ENCODE measurements at regions of chr12 and their contacts with region 1.

Region 1: GRCh38 chr12:121626087-121626852 is at the start of gene ORAI1:
- DNase-seq: peak; percentile 63
- ATAC-seq: peak; percentile 75
- H3K4me3 ChIP-seq: peak within 1 kb of the TSS; percentile 83
- H3K27ac ChIP-seq: peak within 1 kb of the TSS; percentile 92
- H3K4me1 ChIP-seq: peaks cover 19% of the 10 kb centered on the region
- H3K27me3 ChIP-seq: no peaks in the 10 kb centered on the region
- CTCF ChIP-seq: peak in 1 of 3 experiments; percentile 31; a peak in 1 of 6 replicates
- EP300 ChIP-seq: no peak
- POLR2A ChIP-seq: peak; percentile 85
- RAD21 ChIP-seq: no peak
- polyA plus RNA-seq, gene ORAI1: 5.5 to 6.1 TPM

Region 2: GRCh38 chr12:121388421-121388981 is 237.8 kb before region 1 on chr12:
- CTCF ChIA-PET with region 1: no interaction called
- POLR2A ChIA-PET with region 1: no interaction called
- RAD21 ChIA-PET with region 1: no interaction called
- SMC1A ChIA-PET with region 1: no interaction called
- in situ Hi-C with region 1: no loop called
- intact Hi-C with region 1: no loop called
- DNase-seq: no peak
- ATAC-seq: no peak
- H3K4me3 ChIP-seq: no peak overlapping the region
- H3K27ac ChIP-seq: no peak overlapping the region
- H3K4me1 ChIP-seq: peaks cover 7% of the 10 kb centered on the region
- H3K27me3 ChIP-seq: no peaks in the 10 kb centered on the region
- CTCF ChIP-seq: no peak
- EP300 ChIP-seq: no peak
- POLR2A ChIP-seq: no peak
- RAD21 ChIP-seq: no peak

Region 3: GRCh38 chr12:121499929-121500793 is 126.1 kb before region 1 on chr12:
- CTCF ChIA-PET with region 1: interaction called, 10 read pairs
- POLR2A ChIA-PET with region 1: interaction called, 7 read pairs
- RAD21 ChIA-PET with region 1: interaction called, 7 read pairs
- SMC1A ChIA-PET with region 1: interaction called, 10 read pairs
- in situ Hi-C with region 1: no loop called
- intact Hi-C with region 1: loop called (anchors 1 kb)
- DNase-seq: no peak
- ATAC-seq: peak; percentile 94
- H3K4me3 ChIP-seq: no peak overlapping the region
- H3K27ac ChIP-seq: no peak overlapping the region
- H3K4me1 ChIP-seq: no peaks in the 10 kb centered on the region
- H3K27me3 ChIP-seq: no peaks in the 10 kb centered on the region
- CTCF ChIP-seq: peak; percentile 85 to 96 (median 91)
- EP300 ChIP-seq: no peak
- POLR2A ChIP-seq: no peak
- RAD21 ChIP-seq: peak; percentile 92

Region 4: DNA sequence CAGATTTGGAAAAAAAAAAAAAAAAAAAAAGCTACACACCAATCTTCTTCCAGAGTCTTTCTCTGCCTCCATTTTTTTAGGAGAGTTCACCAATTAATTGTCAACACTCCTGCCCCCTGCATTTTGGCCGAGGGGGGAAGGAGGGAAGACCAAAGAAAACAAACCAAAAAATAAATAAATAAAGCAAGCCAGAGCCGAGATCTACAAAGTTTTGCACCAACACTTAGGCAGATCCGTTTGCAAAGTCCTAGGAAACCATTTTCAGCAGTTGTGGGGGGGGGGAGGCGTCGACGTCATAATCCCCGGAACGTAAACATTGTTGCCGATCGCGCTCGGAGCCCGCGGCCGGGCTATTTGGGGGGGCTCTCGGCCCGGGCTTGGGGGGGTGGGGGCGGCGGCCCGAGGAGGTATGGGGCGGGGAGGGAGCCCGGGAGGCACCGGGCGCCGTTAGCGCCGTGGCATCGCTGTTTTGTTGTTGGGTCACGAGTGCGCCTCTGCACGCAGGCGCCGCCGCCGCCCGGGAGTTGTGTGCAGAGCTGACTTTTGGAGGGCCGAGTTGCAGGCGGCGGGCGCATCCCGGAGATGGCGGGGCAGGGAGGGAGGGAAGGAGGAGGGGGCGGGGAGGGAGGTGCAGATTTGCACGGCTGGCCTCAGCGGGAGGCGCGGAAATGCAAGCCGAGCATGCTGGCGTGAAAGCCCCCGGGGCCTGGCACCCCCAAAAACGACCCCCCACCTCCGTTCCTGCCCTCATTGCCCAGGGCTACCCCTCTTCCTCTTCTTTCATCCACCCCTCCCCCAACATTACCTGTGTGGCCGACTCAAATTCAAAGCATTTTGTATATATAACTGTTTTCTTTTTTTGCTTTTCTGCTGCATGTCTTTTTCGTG is 46.0 kb before region 1 on chr12:
- CTCF ChIA-PET with region 1: interaction called, 5 read pairs
- POLR2A ChIA-PET with region 1: interaction called, 18 read pairs
- RAD21 ChIA-PET with region 1: interaction called, 31 read pairs
- SMC1A ChIA-PET with region 1: interaction called, 12 read pairs
- in situ Hi-C with region 1: no loop called
- intact Hi-C with region 1: no loop called
- DNase-seq: no peak
- ATAC-seq: peak; percentile 67
- H3K4me3 ChIP-seq: peak overlapping the region; percentile 77
- H3K27ac ChIP-seq: peak overlapping the region; percentile 59
- H3K4me1 ChIP-seq: peaks cover 19% of the 10 kb centered on the region
- H3K27me3 ChIP-seq: no peaks in the 10 kb centered on the region
- CTCF ChIP-seq: no peak
- EP300 ChIP-seq: no peak
- POLR2A ChIP-seq: peak; percentile 69
- RAD21 ChIP-seq: no peak

Region 5: GRCh38 chr12:121649819-121650353 is 23.6 kb after region 1 on chr12:
- CTCF ChIA-PET with region 1: interaction called, 4 read pairs
- POLR2A ChIA-PET with region 1: interaction called, 10 read pairs
- RAD21 ChIA-PET with region 1: no interaction called
- SMC1A ChIA-PET with region 1: interaction called, 3 read pairs
- in situ Hi-C with region 1: no loop called
- intact Hi-C with region 1: no loop called
- DNase-seq: no peak
- ATAC-seq: peak; percentile 52; the same call in 2 of the 3 replicates
- H3K4me3 ChIP-seq: no peak overlapping the region
- H3K27ac ChIP-seq: no peak overlapping the region
- H3K4me1 ChIP-seq: no peaks in the 10 kb centered on the region
- H3K27me3 ChIP-seq: no peaks in the 10 kb centered on the region
- CTCF ChIP-seq: no peak
- EP300 ChIP-seq: no peak
- POLR2A ChIP-seq: no peak
- RAD21 ChIP-seq: no peak

Region 6: DNA sequence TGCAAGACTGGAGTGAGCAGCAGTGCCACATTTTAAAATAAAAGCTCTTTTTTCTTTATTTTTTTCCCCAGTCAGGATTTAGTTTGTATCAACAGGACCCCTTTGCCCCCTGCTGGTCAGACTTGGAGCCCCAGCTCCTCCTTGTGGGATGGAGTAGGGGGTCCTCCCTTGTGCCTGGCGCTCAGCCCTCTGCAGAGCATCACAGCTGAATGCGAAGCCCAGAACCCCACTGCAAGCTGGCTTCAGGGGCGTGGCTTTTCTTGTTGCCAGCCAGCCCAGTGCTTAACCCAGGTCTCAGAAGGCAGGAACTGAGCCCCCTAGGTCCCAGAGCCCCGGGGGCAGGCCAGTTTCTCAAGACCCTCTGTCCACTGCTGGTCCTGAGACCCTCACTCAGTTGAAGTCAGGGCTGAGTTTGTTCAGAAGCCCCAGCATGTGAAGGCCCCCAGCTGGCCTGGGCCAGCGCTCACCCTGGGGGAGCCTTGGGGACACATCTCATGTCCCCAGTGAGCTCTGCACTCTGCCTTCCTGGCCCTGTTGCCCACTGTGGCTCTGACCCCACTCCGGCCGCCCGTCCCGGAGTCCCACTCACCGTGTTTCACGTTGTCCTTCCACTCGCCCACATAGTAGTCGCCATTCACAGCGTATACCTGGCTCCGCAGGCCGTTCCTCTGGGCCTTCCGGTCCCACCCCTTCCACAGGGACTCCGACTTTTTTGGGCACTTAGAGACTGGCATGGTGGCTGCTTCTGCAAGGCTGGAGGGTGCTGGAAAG is 42.7 kb after region 1 on chr12:
- CTCF ChIA-PET with region 1: interaction called, 32 read pairs
- POLR2A ChIA-PET with region 1: interaction called, 13 read pairs
- RAD21 ChIA-PET with region 1: interaction called, 61 read pairs
- SMC1A ChIA-PET with region 1: interaction called, 19 read pairs
- in situ Hi-C with region 1: no loop called
- intact Hi-C with region 1: loop called (anchors 2 kb)
- DNase-seq: no peak
- ATAC-seq: no peak
- H3K4me3 ChIP-seq: no peak overlapping the region
- H3K27ac ChIP-seq: no peak overlapping the region
- H3K4me1 ChIP-seq: peaks cover 15% of the 10 kb centered on the region
- H3K27me3 ChIP-seq: no peaks in the 10 kb centered on the region
- CTCF ChIP-seq: peak; percentile 58 to 71 (median 59)
- EP300 ChIP-seq: no peak
- POLR2A ChIP-seq: no peak
- RAD21 ChIP-seq: peak; percentile 73

Region 7: GRCh38 chr12:121724930-121725329 is 98.7 kb after region 1 on chr12:
- CTCF ChIA-PET with region 1: no interaction called
- POLR2A ChIA-PET with region 1: no interaction called
- RAD21 ChIA-PET with region 1: no interaction called
- SMC1A ChIA-PET with region 1: no interaction called
- in situ Hi-C with region 1: no loop called
- intact Hi-C with region 1: no loop called
- DNase-seq: no peak
- ATAC-seq: no peak
- H3K4me3 ChIP-seq: no peak overlapping the region
- H3K27ac ChIP-seq: no peak overlapping the region
- H3K4me1 ChIP-seq: no peaks in the 10 kb centered on the region
- H3K27me3 ChIP-seq: no peaks in the 10 kb centered on the region
- CTCF ChIP-seq: no peak
- EP300 ChIP-seq: no peak
- POLR2A ChIP-seq: no peak
- RAD21 ChIP-seq: no peak

Region 8: DNA sequence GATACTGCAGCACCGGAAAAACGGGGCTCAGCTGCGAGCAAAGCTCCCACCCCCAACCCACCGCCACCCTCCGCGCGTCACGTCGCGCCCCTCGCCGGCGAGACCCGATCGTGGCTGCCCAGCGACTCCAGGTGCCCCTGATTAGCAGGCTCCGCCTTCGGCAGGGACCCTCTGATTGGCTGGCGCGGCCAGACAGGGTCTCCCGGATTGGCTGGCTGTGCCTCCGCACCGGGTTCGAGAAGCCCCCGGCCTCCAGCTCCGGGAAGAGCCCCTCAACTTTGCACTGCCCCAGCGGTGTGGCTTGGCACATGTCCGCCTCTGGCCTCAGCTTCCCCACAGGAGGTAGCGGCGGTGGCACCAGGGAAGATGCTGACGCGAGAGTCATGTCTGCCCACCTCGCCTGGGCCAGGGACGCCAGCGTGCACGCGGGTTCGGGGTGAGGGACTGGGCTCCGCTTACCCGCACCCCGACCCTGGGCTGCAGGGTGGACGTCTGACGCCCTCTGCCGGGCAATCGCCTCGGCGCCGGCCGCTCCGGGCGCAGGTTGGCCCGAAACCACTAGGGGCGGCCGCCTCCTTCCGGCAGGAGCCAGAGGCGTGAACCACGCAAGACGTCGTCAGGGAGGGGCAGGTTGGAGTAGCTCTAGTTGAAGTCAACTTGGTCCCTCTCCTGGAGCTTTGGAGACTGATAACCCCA is 167.7 kb after region 1 on chr12:
- CTCF ChIA-PET with region 1: interaction called, 4 read pairs
- POLR2A ChIA-PET with region 1: no interaction called
- RAD21 ChIA-PET with region 1: interaction called, 11 read pairs
- SMC1A ChIA-PET with region 1: no interaction called
- in situ Hi-C with region 1: no loop called
- intact Hi-C with region 1: no loop called
- DNase-seq: peak; percentile 82
- ATAC-seq: peak; percentile 71
- H3K4me3 ChIP-seq: peak overlapping the region; percentile 97
- H3K27ac ChIP-seq: peak overlapping the region; percentile 73
- H3K4me1 ChIP-seq: peaks cover 44% of the 10 kb centered on the region
- H3K27me3 ChIP-seq: no peaks in the 10 kb centered on the region
- CTCF ChIP-seq: peak; percentile 100; a peak in 5 of 6 replicates
- EP300 ChIP-seq: no peak
- POLR2A ChIP-seq: peak; percentile 73
- RAD21 ChIP-seq: peak; percentile 90